Upper lobe of right lung (tissue), 1 donor: ENCODE measurements at regions of chr12 and their contacts with region 1.

Region 1: DNA sequence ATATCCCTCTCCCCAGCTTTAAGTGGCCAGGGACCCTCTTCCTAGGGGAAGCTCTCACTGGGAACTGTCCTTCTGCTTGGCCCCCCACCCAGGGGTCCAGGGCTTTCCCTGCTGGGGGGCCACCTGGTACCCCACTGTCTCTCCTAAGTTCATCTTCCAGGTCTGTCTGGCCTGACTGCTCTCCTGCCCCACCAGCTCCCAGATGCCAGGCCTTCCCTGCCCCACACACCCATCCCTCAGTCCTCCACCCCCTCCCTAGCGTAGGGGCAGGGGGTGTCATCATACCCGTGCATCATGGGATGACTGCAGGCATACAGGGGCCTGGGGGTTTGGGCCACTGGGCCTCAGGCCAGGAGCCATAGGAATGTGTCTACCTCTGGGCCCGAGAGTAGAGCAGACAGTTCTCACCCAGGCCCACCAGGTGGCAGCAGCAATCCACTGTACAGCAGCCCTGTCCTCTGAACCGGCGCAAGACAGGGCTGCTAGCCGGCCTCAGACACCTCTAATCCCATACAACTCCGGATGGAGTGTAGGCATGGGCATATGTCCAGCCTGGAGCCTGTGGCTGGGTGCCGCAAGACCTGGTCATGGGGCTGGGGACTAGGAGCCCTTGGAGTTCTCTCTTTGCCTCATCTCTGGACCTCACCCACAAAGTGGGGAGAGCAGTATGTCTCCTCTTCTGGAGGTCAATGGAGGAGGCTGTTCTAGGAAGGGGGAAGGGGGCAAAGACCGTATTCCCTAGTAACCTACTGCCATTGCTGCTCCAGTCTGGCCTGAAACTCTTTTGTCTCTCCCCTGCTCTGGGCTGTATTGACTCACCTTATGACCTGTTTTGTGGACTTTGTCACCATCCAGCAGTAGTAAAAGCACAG is 10.0 kb upstream of the SMARCD1 start:
- DNase-seq: peak; percentile 91
- ATAC-seq: peak; percentile 92
- H3K4me3 ChIP-seq: no peak overlapping the region
- H3K27ac ChIP-seq: no peak overlapping the region
- H3K4me1 ChIP-seq: no peaks in the 10 kb centered on the region
- H3K27me3 ChIP-seq: no peaks in the 10 kb centered on the region
- CTCF ChIP-seq: peak; percentile 95

Region 2: GRCh38 chr12:49888461-49889151 is 186.6 kb before region 1 on chr12:
- intact Hi-C with region 1: no loop called
- DNase-seq: no peak
- ATAC-seq: peak; percentile 5
- H3K4me3 ChIP-seq: no peak overlapping the region
- H3K27ac ChIP-seq: no peak overlapping the region
- H3K4me1 ChIP-seq: no peaks in the 10 kb centered on the region
- H3K27me3 ChIP-seq: peaks cover 7% of the 10 kb centered on the region
- CTCF ChIP-seq: no peak

Region 3: DNA sequence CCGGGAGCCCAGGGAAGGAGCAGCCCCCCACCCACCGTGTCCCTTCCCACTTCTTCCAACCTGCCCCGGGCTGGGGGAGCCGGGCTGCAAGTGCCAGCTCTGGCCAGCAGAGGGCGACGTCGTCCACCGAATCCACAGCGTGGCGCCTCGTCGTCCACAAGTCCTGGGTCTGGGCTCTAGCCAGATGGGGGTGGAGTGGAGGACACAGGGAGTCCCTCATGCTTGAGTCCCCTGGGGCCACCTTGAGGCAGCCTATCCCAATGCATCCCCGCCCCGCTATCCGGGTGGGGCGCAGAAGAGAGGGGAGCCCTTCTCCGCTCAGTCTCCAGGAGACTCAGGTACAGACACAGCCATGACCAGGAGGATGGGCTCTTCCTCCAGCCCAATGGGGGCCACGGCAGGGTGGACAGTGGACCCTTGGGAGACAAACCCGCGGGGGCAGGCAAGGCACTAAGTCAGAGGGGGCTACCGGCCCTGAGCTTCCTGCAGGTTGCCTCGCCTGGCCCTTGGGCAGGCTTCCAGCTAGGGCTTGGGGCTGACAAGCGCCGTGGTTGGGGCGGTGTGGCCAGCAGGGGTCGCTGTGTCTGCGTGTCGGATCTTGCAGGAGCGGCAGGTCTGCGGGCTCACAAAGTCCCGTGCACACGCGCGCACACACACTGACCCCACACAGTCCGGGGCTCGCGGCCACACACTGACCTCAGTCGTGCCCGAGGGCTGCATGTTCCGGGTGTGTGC is 108.0 kb before region 1 on chr12:
- intact Hi-C with region 1: loop called (anchors 5 kb)
- DNase-seq: peak; percentile 96
- ATAC-seq: peak; percentile 89
- H3K4me3 ChIP-seq: peak overlapping the region; percentile 34
- H3K27ac ChIP-seq: no peak overlapping the region
- H3K4me1 ChIP-seq: peaks cover 8% of the 10 kb centered on the region
- H3K27me3 ChIP-seq: no peaks in the 10 kb centered on the region
- CTCF ChIP-seq: peak; percentile 75

Region 4: GRCh38 chr12:50174971-50175715 is 100.0 kb after region 1 on chr12:
- intact Hi-C with region 1: loop called (anchors 10 kb)
- DNase-seq: no peak
- ATAC-seq: peak; percentile 60
- H3K4me3 ChIP-seq: no peak overlapping the region
- H3K27ac ChIP-seq: no peak overlapping the region
- H3K4me1 ChIP-seq: no peaks in the 10 kb centered on the region
- H3K27me3 ChIP-seq: no peaks in the 10 kb centered on the region
- CTCF ChIP-seq: peak; percentile 71

Region 5: DNA sequence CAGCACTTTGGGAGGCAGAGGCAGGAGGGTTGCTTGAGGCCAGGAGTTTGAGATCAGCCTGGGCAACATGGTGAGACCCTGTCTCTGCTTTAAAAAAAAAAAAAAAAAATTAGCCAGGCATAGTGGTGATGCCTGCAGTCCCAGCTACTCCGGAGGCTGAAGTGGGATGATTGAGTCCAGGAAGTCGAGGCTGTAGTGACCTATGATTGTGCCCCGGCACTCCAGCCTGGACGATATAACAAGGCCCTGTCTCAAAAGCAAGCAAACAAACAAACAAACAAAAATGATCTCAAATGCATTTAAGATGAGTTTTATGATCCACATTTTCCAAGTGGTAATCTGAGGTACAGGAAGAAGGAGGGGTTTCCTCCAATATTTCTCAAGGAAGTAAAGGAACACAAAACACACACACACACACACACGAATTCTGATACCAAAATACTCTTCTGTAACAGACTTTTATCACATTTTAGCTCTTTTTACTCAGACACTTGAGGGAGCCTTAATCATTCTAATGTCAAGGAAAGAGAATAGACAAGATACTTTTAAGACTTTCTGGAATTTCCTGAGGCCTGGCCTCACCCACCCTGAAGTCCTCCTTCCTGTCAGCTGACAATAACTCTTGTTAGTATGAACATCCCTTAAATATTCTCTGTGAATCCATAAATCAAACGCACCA is 136.4 kb after region 1 on chr12:
- intact Hi-C with region 1: no loop called
- DNase-seq: no peak
- ATAC-seq: no peak
- H3K4me3 ChIP-seq: no peak overlapping the region
- H3K27ac ChIP-seq: peak overlapping the region; percentile 32
- H3K4me1 ChIP-seq: peaks cover 11% of the 10 kb centered on the region
- H3K27me3 ChIP-seq: no peaks in the 10 kb centered on the region
- CTCF ChIP-seq: no peak

Region 6: GRCh38 chr12:50677858-50678257 is 602.7 kb after region 1 on chr12:
- intact Hi-C with region 1: no loop called
- DNase-seq: no peak
- ATAC-seq: no peak
- H3K4me3 ChIP-seq: no peak overlapping the region
- H3K27ac ChIP-seq: no peak overlapping the region
- H3K4me1 ChIP-seq: no peaks in the 10 kb centered on the region
- H3K27me3 ChIP-seq: no peaks in the 10 kb centered on the region
- CTCF ChIP-seq: no peak